Activated T-helper 1 cell treated with anti-CD3 and anti-CD28 coated beads, Interleukin-12 subunit alpha, Interleukin-12 subunit beta, Interleukin-2, Interleukin-4 antibody, amounts not matched to agents 30 ng/mL and 10 ng/mL and 1 ng/mL, durations not matched to agents 14 hours and 24 hours and 36 hours (primary cell): ENCODE measurements at regions of chr5 and their contacts with region 1.

Region 1: GRCh38 chr5:81301271-81302015 is at the start of gene ZCCHC9:
- DNase-seq: peak; percentile 89
- H3K4me3 Mint-ChIP-seq: peak within 1 kb of the TSS; percentile 97
- H3K27ac Mint-ChIP-seq: peak within 1 kb of the TSS; percentile 98
- H3K4me1 Mint-ChIP-seq: peaks cover 32% of the 10 kb centered on the region
- H3K27me3 Mint-ChIP-seq: no peaks in the 10 kb centered on the region
- total RNA-seq, gene ZCCHC9: 41.7 and 47.3 TPM in 2 replicates

Region 2: DNA sequence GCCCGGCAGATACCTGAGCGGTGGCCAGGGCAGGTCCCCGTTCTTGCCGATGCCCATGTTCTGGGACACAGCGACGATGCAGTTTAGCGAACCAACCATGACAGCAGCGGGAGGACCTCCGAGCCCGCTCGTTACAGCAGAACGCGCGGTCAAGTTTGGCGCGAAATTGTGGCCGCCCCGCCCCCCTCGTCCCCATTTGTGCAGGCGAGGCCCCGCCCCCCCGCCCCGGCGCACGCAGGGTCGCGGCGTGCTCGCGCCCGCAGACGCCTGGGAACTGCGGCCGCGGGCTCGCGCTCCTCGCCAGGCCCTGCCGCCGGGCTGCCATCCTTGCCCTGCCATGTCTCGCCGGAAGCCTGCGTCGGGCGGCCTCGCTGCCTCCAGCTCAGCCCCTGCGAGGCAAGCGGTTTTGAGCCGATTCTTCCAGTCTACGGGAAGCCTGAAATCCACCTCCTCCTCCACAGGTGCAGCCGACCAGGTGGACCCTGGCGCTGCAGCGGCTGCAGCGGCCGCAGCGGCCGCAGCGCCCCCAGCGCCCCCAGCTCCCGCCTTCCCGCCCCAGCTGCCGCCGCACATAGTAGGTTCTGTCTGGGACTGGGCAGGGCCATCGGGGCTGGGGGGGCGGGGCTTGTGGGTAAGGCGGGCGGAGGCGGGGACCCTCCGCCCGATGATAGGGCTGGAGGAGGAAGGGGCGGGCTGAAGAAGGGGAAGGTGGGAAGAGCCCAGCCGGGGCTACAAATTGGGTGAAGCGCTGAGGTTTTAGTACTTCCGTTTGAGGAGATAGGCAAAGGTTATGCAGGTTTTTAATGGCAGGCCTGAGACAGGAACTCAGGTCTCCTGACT is 646.8 kb before region 1 on chr5 and contains the starts of genes DHFR and MSH3:
- intact Hi-C with region 1: loop called (anchors 1 kb)
- DNase-seq: peak; percentile 84
- H3K4me3 Mint-ChIP-seq: peak within 1 kb of the TSS; percentile 93
- H3K27ac Mint-ChIP-seq: peak within 1 kb of the TSS; percentile 98
- H3K4me1 Mint-ChIP-seq: peaks cover 37% of the 10 kb centered on the region
- H3K27me3 Mint-ChIP-seq: no peaks in the 10 kb centered on the region
- total RNA-seq, gene DHFR: 55.9 and 60.3 TPM in 2 replicates
- total RNA-seq, gene MSH3: 20.2 and 20.7 TPM in 2 replicates

Region 3: GRCh38 chr5:81020478-81021174 is 280.8 kb before region 1 on chr5:
- intact Hi-C with region 1: loop called (anchors 1 kb)
- DNase-seq: no peak
- H3K4me3 Mint-ChIP-seq: no peak overlapping the region
- H3K27ac Mint-ChIP-seq: no peak overlapping the region
- H3K4me1 Mint-ChIP-seq: peaks cover 61% of the 10 kb centered on the region
- H3K27me3 Mint-ChIP-seq: no peaks in the 10 kb centered on the region

Region 4: GRCh38 chr5:81233080-81233634 is 68.3 kb before region 1 on chr5 and contains the start of gene CKMT2:
- intact Hi-C with region 1: no loop called
- DNase-seq: no peak
- H3K4me3 Mint-ChIP-seq: no peak within 1 kb of the TSS
- H3K27ac Mint-ChIP-seq: no peak within 1 kb of the TSS
- H3K4me1 Mint-ChIP-seq: peaks cover 27% of the 10 kb centered on the region
- H3K27me3 Mint-ChIP-seq: no peaks in the 10 kb centered on the region
- total RNA-seq, gene CKMT2: not detected in 2 replicates

Region 5: GRCh38 chr5:81420039-81420667 is 118.7 kb after region 1 on chr5:
- intact Hi-C with region 1: loop called (anchors 5 kb)
- DNase-seq: peak; percentile 21
- H3K4me3 Mint-ChIP-seq: peak overlapping the region; percentile 28
- H3K27ac Mint-ChIP-seq: peak overlapping the region; percentile 70
- H3K4me1 Mint-ChIP-seq: peaks cover 36% of the 10 kb centered on the region
- H3K27me3 Mint-ChIP-seq: no peaks in the 10 kb centered on the region

Region 6: DNA sequence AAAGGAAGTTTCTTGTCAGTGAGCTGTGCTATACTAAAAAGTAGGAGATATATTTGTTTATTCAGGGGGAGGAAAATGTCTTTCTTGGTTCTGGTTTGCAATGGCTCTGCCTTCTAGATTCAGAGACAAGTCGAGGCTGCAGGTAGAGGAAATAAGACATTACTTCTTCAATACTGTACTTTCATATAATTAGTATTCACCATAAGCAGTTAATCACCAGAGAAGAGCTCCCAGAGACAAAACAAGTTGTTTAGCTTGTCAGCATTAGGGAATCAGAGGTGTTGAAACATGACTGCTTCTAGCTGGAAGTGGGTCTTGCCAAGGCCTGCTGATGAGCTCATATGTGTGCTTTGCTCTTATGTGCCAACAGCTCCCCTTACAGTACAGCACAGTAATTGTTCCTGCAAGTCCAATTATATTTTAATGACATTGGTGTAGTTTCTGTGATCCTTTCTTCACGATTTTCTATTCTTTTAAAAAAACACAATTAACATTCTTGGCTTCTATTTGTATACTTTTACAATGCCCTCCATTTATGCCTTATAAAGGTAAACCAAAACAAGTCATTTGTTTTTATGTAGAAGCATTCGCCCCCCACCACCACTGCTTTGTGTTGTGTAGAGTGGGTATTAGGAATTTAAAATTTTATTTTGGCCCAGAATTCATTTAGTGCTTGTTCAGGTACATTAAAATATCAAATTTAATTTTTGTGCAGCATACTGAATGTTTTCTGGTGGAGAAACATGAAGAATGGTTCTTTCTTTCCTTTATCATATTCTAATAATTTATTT is 864.5 kb after region 1 on chr5:
- intact Hi-C with region 1: loop called (anchors 10 kb)
- DNase-seq: no peak
- H3K4me3 Mint-ChIP-seq: no peak overlapping the region
- H3K27ac Mint-ChIP-seq: no peak overlapping the region
- H3K4me1 Mint-ChIP-seq: no peaks in the 10 kb centered on the region
- H3K27me3 Mint-ChIP-seq: no peaks in the 10 kb centered on the region